B cell (primary cell): ENCODE measurements at regions of chr3 and their contacts with region 1.

Region 1: DNA sequence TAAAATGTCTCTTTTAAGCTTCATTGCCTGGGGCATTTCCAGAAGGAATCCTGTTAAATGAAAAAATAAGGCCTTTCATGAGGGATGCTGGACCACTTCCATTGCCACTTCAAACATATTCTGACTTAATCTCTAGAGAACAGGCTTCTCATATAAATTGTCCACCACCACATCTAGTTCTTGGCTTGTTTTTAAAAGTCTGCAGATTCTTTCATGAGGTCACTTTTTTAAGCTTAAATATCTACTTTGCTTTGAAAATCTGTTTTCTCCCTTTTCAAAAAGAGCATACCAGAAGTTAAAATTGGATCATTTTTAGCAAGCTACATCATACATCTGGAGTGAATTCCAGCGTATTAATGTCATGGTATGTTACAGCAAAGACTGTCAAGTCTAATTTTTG is 131.6 kb downstream of the C3orf70 start:
- DNase-seq: no peak
- ATAC-seq: no peak
- H3K4me3 ChIP-seq: no peak overlapping the region
- H3K4me3 Mint-ChIP-seq: no peak overlapping the region
- H3K27ac ChIP-seq: no peak overlapping the region
- H3K27ac Mint-ChIP-seq: no peak overlapping the region
- H3K4me1 ChIP-seq: no peaks in the 10 kb centered on the region
- H3K4me1 Mint-ChIP-seq: no peaks in the 10 kb centered on the region
- H3K27me3 ChIP-seq: no peaks in the 10 kb centered on the region
- H3K27me3 Mint-ChIP-seq: no peaks in the 10 kb centered on the region
- CTCF ChIP-seq: no peak

Region 2: DNA sequence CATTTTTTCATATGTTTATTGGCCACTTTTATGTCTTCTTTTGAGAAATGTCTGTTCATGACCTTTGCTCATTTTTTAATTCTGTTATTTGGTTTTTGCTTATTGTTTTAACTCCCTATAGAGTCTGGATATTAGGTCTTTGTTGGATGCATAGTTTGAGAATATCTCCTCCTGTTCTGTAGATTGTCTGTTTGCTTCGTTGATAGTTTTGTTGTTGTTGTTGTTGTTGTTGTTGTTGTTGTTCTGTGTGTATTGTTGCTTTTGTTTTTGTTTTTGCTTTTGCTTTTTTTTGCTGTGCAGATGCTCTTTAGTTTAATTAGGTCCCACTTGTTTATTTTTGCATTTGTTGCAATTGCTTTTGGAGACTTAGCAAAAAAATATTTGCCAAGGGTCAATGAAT is 13.1 kb after region 1 on chr3:
- CTCF ChIA-PET with region 1: no interaction called
- POLR2A ChIA-PET with region 1: interaction called, 11 read pairs
- intact Hi-C with region 1: no loop called
- DNase-seq: no peak
- ATAC-seq: no peak
- H3K4me3 ChIP-seq: no peak overlapping the region
- H3K4me3 Mint-ChIP-seq: no peak overlapping the region
- H3K27ac ChIP-seq: no peak overlapping the region
- H3K27ac Mint-ChIP-seq: no peak overlapping the region
- H3K4me1 ChIP-seq: no peaks in the 10 kb centered on the region
- H3K4me1 Mint-ChIP-seq: no peaks in the 10 kb centered on the region
- H3K27me3 ChIP-seq: no peaks in the 10 kb centered on the region
- H3K27me3 Mint-ChIP-seq: no peaks in the 10 kb centered on the region
- CTCF ChIP-seq: no peak